ENCODE measurements at regions of chr17 and their contacts with region 1.

Region 1: DNA sequence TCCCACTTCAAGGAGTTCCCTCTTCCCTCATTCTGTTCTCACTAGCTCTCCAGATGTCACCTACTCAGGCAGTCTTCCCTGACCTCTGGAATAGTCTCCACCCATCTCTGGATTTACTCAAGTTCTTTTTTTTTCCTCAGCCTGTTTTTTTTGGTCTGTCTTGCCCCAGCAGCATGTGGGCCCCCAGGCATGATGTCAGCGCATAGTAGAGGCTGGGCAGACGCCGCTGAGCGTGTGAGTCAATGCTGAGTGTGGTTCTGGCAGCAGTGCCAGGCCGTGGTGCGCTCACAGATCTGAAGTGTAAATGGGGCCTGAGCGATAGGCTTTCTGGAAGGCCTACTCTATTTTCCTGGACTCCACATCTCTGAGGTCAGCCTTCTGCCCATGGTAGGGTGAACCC is 2.7 kb upstream of the KCNJ18 start:
- DNase-seq: no peak
- H3K4me3 ChIP-seq: no peak overlapping the region
- H3K27ac ChIP-seq: no peak overlapping the region
- H3K4me1 ChIP-seq: no peaks in the 10 kb centered on the region
- H3K27me3 ChIP-seq: no peaks in the 10 kb centered on the region
- CTCF ChIP-seq: no peak

Region 2: DNA sequence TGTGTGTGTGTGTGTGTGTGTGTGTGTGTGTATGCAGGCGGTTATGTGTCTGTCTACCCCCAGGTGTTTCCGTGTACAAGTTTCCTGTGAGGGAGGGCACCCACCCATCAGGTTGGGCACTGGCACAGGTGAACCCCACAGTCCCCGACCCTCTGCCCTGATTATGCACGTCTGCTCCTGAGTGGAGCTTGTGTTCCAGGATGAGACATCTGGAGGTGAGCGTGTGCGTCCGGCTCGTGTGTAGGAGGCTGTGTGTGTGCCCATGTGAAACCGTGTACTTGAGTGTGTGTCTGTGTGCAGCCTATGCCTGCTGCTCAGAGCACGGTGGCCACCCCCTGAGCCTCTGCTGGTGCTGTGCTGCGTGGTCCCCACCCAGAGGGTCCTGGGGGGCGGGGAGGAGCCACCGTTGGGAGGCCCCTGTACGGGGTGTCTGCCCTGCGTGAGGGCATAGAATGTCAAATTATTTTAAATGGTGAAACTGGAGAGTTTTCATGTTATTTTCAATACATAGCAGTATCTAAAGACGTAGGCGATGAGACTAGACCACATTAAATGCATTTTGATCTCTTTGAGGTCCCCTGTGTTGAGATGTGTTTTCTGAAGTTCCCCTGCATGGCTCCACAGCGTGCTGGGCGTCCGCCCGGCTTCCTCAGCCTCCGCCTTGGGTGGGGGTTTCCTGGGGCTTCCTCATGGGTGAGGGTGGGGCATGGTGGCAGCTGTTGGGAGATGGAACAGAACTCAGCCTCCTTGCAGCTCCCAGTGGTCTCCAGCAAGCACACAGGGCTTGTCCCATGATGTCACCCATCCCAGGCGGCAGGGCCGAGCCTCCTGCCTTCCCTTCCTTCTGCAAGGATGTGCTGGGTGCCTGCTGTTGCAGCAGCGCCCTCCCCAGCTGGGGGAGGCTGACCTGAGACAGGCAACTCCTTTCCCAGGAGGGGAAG is 270.0 kb before region 1 on chr17:
- dilution Hi-C with region 1: loop called (anchors 25 kb)
- DNase-seq: no peak
- H3K4me3 ChIP-seq: no peak overlapping the region
- H3K27ac ChIP-seq: no peak overlapping the region
- H3K4me1 ChIP-seq: no peaks in the 10 kb centered on the region
- H3K27me3 ChIP-seq: no peaks in the 10 kb centered on the region
- CTCF ChIP-seq: no peak

Measured in keratinocyte (primary cell).